ENCODE measurements at regions of chr1 and their contacts with region 1.

Region 1: GRCh38 chr1:165352442-165353293 is 3.8 kb downstream of the LMX1A start:
- DNase-seq: no peak
- H3K4me3 Mint-ChIP-seq: no peak overlapping the region
- H3K27ac Mint-ChIP-seq: no peak overlapping the region
- H3K4me1 Mint-ChIP-seq: no peaks in the 10 kb centered on the region
- H3K27me3 Mint-ChIP-seq: peaks cover 75% of the 10 kb centered on the region

Region 2: DNA sequence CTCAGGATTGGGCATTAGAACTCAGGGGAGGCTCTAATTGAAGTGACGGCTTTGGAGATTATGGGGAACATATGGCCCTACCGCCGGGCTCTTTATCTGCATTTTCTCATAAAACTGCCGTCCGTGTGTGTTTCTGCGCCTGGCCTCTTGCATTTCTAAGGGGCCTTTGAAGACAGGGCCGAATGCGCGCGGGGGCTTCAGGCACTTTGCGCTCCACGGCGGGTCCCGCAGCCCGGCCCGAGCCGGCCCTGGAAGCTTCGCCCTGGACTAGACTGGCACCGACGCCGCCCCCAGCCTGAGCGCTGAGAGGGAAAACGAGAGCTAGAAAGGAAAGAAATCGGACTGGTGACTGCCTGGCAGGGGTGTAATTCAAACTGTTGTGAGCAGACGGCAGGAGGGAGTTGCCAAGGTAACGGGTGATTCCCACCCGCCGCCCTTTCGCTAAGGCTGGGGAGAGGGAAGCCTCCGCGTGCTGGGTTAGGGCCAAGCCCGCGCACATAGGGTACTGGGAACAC is 116.8 kb before region 1 on chr1:
- intact Hi-C with region 1: loop called (anchors 5 kb)
- DNase-seq: no peak
- H3K4me3 Mint-ChIP-seq: no peak overlapping the region
- H3K27ac Mint-ChIP-seq: no peak overlapping the region
- H3K4me1 Mint-ChIP-seq: no peaks in the 10 kb centered on the region
- H3K27me3 Mint-ChIP-seq: peaks cover 56% of the 10 kb centered on the region

Region 3: DNA sequence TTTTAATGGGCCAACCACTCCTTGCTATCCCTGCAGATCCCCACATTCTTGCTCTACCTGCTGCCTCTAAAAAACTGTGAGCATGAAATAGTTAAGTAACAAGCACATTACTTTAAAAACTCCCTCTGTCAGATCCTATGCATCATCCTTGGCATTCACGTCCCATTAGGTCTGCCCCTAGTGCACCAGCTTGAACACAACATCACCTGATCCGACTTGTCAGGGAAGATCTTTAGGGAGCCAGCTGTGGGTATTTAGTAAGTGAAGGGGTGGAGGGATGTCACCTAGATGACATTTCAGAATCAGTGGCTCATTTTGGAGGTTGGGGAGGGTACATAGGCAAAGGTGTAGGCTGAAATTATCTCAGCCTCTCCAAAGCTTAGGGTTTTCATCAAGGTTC is 58.7 kb after region 1 on chr1:
- intact Hi-C with region 1: no loop called
- DNase-seq: no peak
- H3K4me3 Mint-ChIP-seq: no peak overlapping the region
- H3K27ac Mint-ChIP-seq: no peak overlapping the region
- H3K4me1 Mint-ChIP-seq: no peaks in the 10 kb centered on the region
- H3K27me3 Mint-ChIP-seq: peaks cover 50% of the 10 kb centered on the region

Measured in activated T-helper 1 cell treated with anti-CD3 and anti-CD28 coated beads, Interleukin-12 subunit alpha, Interleukin-12 subunit beta, Interleukin-2, Interleukin-4 antibody, amounts not matched to agents 30 ng/mL and 10 ng/mL and 1 ng/mL, durations not matched to agents 14 hours and 24 hours and 36 hours (primary cell).